ENCODE measurements at regions of chr2 and their contacts with region 1.

Region 1: GRCh38 chr2:11829947-11830707 is 83.7 kb downstream of the LPIN1 start:
- DNase-seq: peak; percentile 62 to 83 (median 71)
- ATAC-seq: peak; percentile 88 to 92
- H3K4me3 ChIP-seq: peak overlapping the region; percentile 34
- H3K27ac ChIP-seq: peak overlapping the region; percentile 55
- H3K4me1 ChIP-seq: peaks cover 8% of the 10 kb centered on the region
- H3K27me3 ChIP-seq: no peaks in the 10 kb centered on the region

Region 2: GRCh38 chr2:11437602-11438001 is 392.5 kb before region 1 on chr2:
- intact Hi-C with region 1: no loop called
- DNase-seq: no peak
- ATAC-seq: peak in 1 of 2 donors; percentile 39
- H3K4me3 ChIP-seq: no peak overlapping the region
- H3K27ac ChIP-seq: no peak overlapping the region
- H3K4me1 ChIP-seq: no peaks in the 10 kb centered on the region
- H3K27me3 ChIP-seq: no peaks in the 10 kb centered on the region

Region 3: DNA sequence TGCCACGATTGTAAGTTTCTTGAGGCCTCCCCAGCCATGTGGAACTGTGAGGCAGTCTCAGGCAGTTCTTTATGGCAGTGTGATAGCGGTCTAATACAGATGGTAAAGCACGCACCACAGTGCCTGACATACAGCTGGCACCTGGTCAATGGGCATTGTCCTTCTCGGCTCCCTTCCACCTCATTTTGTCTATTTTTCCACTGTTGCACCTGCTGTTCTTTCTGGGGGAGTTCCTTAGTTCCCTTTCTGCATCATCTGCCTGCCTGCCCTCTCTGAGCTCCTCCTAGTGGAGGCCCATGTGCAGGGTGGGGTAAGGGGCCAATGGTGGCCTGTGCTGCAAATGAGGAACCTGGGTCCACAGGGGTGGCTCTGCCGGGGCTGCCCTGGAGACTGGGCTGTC is 73.9 kb after region 1 on chr2:
- intact Hi-C with region 1: no loop called
- DNase-seq: peak in 1 of 3 donors; percentile 52
- ATAC-seq: peak in 1 of 2 donors; percentile 25
- H3K4me3 ChIP-seq: no peak overlapping the region
- H3K27ac ChIP-seq: no peak overlapping the region
- H3K4me1 ChIP-seq: no peaks in the 10 kb centered on the region
- H3K27me3 ChIP-seq: no peaks in the 10 kb centered on the region

Region 4: DNA sequence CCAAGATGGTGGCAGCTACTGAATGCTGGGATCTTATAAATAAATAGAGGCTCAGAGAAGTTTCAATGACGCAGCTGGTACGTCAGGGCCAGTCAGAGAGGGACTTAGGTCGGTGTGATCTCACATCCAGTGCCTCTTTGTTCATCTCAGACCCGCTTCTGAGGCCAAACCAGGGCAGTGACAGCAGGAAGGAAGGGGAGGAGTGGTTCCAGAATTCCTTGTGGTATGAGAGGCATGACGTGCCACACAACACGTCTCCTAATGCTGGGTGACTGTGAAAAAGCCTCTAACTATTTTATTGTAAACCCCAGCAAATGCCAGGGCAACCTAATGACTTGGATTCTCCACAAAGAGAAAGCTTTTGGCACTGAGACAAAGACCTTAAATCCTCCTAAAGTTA is 339.6 kb after region 1 on chr2:
- intact Hi-C with region 1: loop called in 1 of 4 experiments (anchors 10 kb)
- DNase-seq: peak; percentile 57 to 68 (median 60)
- ATAC-seq: peak; percentile 75 to 94
- H3K4me3 ChIP-seq: no peak overlapping the region
- H3K27ac ChIP-seq: no peak overlapping the region
- H3K4me1 ChIP-seq: peaks cover 13% of the 10 kb centered on the region
- H3K27me3 ChIP-seq: no peaks in the 10 kb centered on the region

Measured in right cardiac atrium (tissue), 5 donors.